OCI-LY7 (cell line): ENCODE measurements at regions of chr7 and their contacts with region 1.

Region 1: DNA sequence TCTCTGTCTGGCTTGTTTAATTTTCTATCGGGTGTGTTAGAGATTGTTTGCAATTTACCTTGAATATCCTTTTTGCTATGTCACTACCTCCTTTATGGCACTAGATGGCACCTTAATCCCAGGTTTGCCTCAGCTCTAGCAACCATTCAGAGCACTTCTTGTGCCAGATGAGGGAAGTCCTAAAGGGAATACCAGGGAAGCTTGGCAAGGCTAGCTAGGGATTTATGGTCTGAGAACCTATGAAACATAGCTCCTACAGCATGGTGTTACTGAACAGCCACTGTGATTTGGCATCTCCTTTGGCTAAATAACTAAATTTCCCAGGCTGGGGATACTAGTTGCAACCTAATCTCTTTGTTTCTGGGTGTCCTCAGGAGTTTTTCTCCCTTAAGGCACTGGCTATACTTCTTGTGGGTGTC is 69.0 kb upstream of the VOPP1 start:
- DNase-seq: peak; percentile 74
- H3K4me3 ChIP-seq: no peak overlapping the region
- H3K27ac ChIP-seq: no peak overlapping the region
- H3K4me1 ChIP-seq: peaks cover 12% of the 10 kb centered on the region
- CTCF ChIP-seq: peak; percentile 96

Region 2: DNA sequence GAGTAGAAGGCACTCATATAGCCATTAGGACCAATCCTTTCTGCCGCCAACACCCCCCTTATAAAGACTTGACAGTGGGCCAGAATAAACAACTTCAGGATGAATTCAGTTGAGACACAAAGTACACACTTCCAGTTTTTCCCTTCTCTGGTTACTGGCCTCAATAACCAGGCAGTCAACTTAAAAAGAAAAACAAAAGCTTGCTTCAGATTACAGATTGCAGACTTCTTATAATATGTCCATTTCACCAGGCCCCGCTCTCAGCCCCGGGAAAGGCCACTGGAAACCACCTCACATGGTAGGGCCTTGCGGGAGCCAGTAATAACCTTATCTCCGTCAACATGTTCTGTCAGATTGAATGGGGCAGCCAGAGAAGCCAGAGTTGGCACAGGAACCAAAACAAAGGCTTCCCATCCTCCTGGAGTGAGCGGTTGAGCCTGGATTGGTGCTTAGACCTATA is 513.6 kb before region 1 on chr7:
- CTCF ChIA-PET with region 1: no interaction called
- POLR2A ChIA-PET with region 1: no interaction called
- intact Hi-C with region 1: no loop called
- DNase-seq: no peak
- H3K4me3 ChIP-seq: no peak overlapping the region
- H3K27ac ChIP-seq: no peak overlapping the region
- H3K4me1 ChIP-seq: no peaks in the 10 kb centered on the region
- CTCF ChIP-seq: no peak

Region 3: DNA sequence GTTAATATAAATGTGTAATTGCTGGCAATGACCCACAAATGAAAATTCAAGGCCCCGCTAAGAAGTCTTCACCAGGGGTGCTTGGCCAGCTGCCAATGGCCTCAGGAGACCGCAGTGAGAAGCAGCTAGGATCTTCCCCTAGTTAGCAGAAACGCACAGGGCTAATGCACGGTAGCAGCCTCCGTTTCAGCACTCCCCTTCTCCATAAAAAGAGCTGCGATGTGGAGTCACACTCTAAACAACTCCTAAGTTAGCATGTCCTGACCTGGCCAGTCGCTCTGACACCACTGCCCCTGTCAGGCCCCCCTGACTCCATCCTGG is 82.3 kb after region 1 on chr7:
- CTCF ChIA-PET with region 1: no interaction called
- POLR2A ChIA-PET with region 1: no interaction called
- intact Hi-C with region 1: loop called (anchors 2 kb)
- DNase-seq: no peak
- H3K4me3 ChIP-seq: no peak overlapping the region
- H3K27ac ChIP-seq: no peak overlapping the region
- H3K4me1 ChIP-seq: no peaks in the 10 kb centered on the region
- CTCF ChIP-seq: no peak

Region 4: GRCh38 chr7:55964261-55965099 is 323.2 kb after region 1 on chr7 and contains the start of gene NIPSNAP2:
- CTCF ChIA-PET with region 1: no interaction called
- POLR2A ChIA-PET with region 1: interaction called, 3 read pairs
- intact Hi-C with region 1: loop called (anchors 1 kb)
- DNase-seq: peak; percentile 78
- H3K4me3 ChIP-seq: peak within 1 kb of the TSS; percentile 90
- H3K27ac ChIP-seq: peak within 1 kb of the TSS; percentile 28
- H3K4me1 ChIP-seq: peaks cover 13% of the 10 kb centered on the region
- CTCF ChIP-seq: peak; percentile 54
- total RNA-seq, gene NIPSNAP2: 28.9 and 35.9 TPM in 2 replicates

Region 5: GRCh38 chr7:56009695-56010094 is 368.4 kb after region 1 on chr7:
- CTCF ChIA-PET with region 1: no interaction called
- POLR2A ChIA-PET with region 1: no interaction called
- intact Hi-C with region 1: loop called (anchors 5 kb)
- DNase-seq: no peak
- H3K4me3 ChIP-seq: no peak overlapping the region
- H3K27ac ChIP-seq: no peak overlapping the region
- H3K4me1 ChIP-seq: no peaks in the 10 kb centered on the region
- CTCF ChIP-seq: no peak

Region 6: DNA sequence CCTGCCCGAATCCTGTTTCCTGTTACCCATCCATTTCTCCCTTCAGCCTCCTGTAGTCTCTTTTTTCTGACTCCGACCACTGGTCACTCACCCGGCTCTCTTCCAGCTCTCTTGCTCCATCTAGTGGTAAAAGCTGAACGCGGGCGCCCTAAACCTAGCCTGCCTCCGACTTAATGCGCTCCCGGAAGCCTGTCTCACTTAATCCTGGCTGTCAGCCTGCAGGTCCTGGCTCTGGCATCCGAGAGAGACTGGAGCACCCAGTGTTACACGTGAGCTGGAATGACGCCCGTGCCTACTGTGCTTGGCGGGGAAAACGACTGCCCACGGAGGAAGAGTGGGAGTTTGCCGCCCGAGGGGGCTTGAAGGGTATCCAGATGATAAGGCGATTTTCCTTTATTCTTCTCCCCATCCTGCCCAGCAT is 433.1 kb after region 1 on chr7:
- CTCF ChIA-PET with region 1: interaction called, 4 read pairs
- POLR2A ChIA-PET with region 1: interaction called, 10 read pairs
- intact Hi-C with region 1: loop called (anchors 1 kb)
- DNase-seq: peak; percentile 78
- H3K4me3 ChIP-seq: no peak overlapping the region
- H3K27ac ChIP-seq: no peak overlapping the region
- H3K4me1 ChIP-seq: no peaks in the 10 kb centered on the region
- CTCF ChIP-seq: peak; percentile 93